Panc1 (cell line): ENCODE measurements at regions of chrX and their contacts with region 1.

Region 1: GRCh38 chrX:154307202-154307601 is 11.6 kb downstream of the TKTL1 start:
- DNase-seq: no peak
- ATAC-seq: no peak
- H3K4me3 ChIP-seq: no peak overlapping the region
- H3K27ac ChIP-seq: no peak overlapping the region
- H3K4me1 ChIP-seq: no peaks in the 10 kb centered on the region
- H3K27me3 ChIP-seq: no peaks in the 10 kb centered on the region
- CTCF ChIP-seq: no peak

Region 2: GRCh38 chrX:154017766-154018517 is 289.3 kb before region 1 on chrX:
- CTCF ChIA-PET with region 1: interaction called, 10 read pairs
- POLR2A ChIA-PET with region 1: no interaction called
- in situ Hi-C with region 1: no loop called
- intact Hi-C with region 1: no loop called
- DNase-seq: no peak
- ATAC-seq: no peak
- H3K4me3 ChIP-seq: peak overlapping the region; percentile 59 to 91
- H3K27ac ChIP-seq: peak overlapping the region; percentile 97
- H3K4me1 ChIP-seq: peaks cover 48% of the 10 kb centered on the region
- H3K27me3 ChIP-seq: no peaks in the 10 kb centered on the region
- CTCF ChIP-seq: no peak

Region 3: DNA sequence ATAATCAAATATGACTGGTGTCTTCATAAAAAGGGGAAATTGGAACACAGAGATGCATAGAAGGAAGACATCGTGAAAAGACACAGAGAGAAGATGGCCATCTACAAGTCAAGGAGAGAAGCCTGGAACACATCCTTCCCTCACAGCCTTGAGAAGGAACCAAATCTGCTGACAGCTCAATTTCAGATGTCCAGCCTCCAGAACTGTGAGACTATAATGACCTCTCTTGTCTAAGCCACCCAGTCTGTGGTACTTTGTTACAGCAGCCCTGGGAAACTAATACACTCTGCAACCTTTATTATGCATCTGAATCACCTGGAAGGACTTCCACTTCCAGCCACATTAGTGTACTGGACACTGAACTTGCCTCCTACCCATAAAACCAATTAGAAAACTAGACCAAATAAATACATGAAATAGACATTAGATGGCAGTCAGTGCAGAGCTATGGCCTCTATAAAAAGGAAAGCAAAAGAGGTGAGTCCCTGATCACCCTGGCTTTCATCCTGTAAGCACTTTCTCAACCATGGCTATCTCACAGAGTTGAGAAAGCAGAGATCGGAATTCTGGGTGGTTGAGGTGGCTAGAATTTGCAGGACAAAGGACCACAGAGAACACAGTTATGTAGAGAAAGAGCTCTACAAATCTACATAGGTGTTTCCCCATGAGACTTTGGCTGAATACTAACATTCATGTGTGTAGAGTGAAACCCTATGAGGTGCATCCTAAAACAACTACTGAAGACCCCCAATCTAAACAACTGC is 418.0 kb after region 1 on chrX:
- CTCF ChIA-PET with region 1: no interaction called
- POLR2A ChIA-PET with region 1: no interaction called
- in situ Hi-C with region 1: no loop called
- intact Hi-C with region 1: no loop called
- DNase-seq: no peak
- ATAC-seq: no peak; the same call in 1 of the 2 replicates
- H3K4me3 ChIP-seq: no peak overlapping the region
- H3K27ac ChIP-seq: peak overlapping the region; percentile 49
- H3K4me1 ChIP-seq: peaks cover 35% of the 10 kb centered on the region
- H3K27me3 ChIP-seq: no peaks in the 10 kb centered on the region
- CTCF ChIP-seq: peak; percentile 17; the same call in 1 of the 2 replicates

Region 4: GRCh38 chrX:155577681-155578080 is 1270.5 kb after region 1 on chrX:
- CTCF ChIA-PET with region 1: no interaction called
- POLR2A ChIA-PET with region 1: no interaction called
- in situ Hi-C with region 1: no loop called
- intact Hi-C with region 1: no loop called
- DNase-seq: no peak
- ATAC-seq: peak; percentile 53
- H3K4me3 ChIP-seq: no peak overlapping the region
- H3K27ac ChIP-seq: no peak overlapping the region
- H3K4me1 ChIP-seq: no peaks in the 10 kb centered on the region
- H3K27me3 ChIP-seq: no peaks in the 10 kb centered on the region
- CTCF ChIP-seq: peak; percentile 14; the same call in 1 of the 2 replicates